BJ (cell line): ENCODE measurements at regions of chr3 and their contacts with region 1.

Region 1: DNA sequence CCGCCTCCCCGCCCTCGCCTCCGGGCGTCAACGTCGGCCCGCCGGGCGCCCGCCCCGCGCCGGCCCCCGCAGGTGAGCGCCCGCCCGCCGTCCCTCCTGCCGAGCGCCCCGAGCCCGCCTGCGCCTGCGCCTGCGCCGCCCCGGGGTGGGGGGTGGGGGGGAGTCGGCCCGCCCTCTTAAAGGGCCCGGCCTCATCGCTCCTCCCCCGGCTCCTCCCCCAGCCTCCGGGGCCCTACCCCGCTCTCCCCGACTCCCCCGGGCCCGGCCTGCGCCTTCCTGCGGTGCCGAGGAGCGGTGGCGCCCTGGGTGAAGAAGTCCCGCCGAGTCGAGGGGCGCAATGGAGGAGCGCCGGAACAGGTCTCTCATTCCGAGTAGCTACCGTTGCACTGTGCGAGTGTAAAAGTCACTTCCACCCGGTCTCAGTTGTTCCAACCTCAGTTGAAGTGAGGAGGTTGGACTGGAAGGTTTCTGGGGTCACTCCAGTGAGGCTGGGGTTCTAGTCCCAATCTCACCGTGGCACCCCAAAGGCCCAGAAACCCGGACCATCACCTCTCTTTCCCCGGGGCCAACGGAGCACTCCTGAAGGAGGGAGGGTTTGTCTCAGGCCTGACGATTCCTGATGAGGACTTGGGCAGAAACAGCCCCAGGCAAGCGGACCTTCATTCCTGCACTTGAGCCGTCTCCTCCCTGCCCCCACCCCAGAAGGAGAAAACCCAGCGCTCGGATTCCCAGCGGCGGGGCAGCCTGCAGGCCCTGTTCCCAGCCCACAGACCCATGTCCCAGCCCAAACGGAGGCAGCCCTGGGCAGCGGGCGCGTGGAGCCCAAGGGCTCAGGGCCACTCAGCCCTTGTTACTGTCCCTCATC is 1.5 kb upstream of the TNK2 start:
- DNase-seq: no peak
- H3K4me3 ChIP-seq: peak overlapping the region; percentile 59
- H3K27me3 ChIP-seq: no peaks in the 10 kb centered on the region
- CTCF ChIP-seq: no peak

Region 2: GRCh38 chr3:195886181-195887141 is 23.4 kb before region 1 on chr3:
- CTCF ChIA-PET with region 1: interaction called, 12 read pairs
- POLR2A ChIA-PET with region 1: no interaction called
- DNase-seq: no peak
- H3K4me3 ChIP-seq: no peak overlapping the region
- H3K27me3 ChIP-seq: no peaks in the 10 kb centered on the region
- CTCF ChIP-seq: no peak

Region 3: DNA sequence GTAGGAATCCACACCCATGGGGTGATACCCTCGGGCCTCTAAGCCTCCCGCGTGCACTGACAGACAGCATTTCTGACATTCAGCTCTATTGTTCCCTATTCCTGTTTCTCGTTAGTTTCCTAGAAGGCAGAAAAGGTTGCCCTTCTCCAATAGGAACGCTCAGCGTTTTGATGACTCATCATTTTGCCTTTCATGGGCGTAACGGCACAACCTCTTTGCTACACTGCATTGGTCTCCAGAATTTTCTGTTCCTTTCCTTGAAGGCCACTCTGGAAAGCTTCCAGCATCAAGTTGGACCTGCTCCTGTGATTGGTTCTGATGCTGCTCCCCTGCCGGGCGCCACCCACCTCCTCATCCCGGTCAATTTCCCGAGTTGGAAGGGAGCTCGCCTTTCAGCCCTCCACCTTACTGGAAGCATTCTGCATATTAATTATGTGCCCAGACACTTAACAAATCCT is 11.5 kb after region 1 on chr3:
- CTCF ChIA-PET with region 1: interaction called, 22 read pairs
- POLR2A ChIA-PET with region 1: no interaction called
- DNase-seq: no peak
- H3K4me3 ChIP-seq: no peak overlapping the region
- H3K27me3 ChIP-seq: peaks cover 1% of the 10 kb centered on the region
- CTCF ChIP-seq: no peak